Activated CD4-positive, alpha-beta memory T cell treated with anti-CD3 and anti-CD28 coated beads, Interleukin-2, amount 10 ng/mL, durations not matched to agents 7 days and 5 days (primary cell): ENCODE measurements at regions of chr1 and their contacts with region 1.

Region 1: GRCh38 chr1:155167166-155168104 is 5.7 kb downstream of the KRTCAP2 start:
- DNase-seq: peak; percentile 91
- H3K4me3 Mint-ChIP-seq: no peak overlapping the region
- H3K27ac Mint-ChIP-seq: no peak overlapping the region
- H3K4me1 Mint-ChIP-seq: peaks cover 30% of the 10 kb centered on the region
- H3K27me3 Mint-ChIP-seq: peaks cover 1% of the 10 kb centered on the region

Region 2: DNA sequence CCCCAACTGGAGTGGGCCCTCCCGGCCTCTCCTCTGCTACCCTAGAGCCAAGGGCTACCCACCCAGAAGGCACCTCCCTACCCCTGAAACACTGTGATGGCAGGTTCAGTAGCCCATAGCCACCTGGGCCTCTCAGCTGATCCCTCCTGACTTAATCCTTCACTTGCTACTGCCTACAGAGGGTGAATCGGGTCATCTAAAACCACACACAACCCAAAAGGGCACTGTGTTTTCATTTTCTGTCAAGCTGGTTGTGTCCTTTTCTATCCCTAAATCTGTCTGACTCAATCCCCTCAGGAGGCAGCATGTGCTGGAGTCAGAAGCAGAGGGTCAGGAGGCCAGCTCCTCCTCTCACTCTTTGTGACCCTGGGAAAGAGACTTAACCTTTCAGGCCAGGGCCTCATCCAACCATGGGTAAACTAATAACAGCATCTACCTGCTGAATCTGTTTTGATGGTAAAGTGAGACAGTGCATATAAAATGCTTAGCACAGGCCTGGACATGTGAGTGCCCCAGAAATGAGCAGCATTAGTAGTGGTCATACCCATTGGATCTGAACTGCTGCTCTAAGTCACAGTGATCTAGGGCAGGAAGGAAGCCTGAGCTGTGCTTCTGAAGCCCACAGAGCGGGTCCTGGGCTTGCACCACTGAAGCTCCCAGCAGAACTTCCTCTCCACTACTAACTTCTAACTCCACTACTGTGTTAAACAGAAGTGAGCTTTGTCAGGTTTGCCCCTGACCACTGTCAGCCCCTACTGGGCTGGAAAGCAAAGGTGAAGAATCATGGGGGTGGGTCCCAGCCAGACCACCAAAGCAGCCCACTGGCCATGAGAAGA is 241.9 kb before region 1 on chr1:
- CTCF ChIA-PET with region 1: no interaction called
- POLR2A ChIA-PET with region 1: no interaction called
- DNase-seq: no peak
- H3K4me3 Mint-ChIP-seq: no peak overlapping the region
- H3K27ac Mint-ChIP-seq: peak overlapping the region; percentile 67
- H3K4me1 Mint-ChIP-seq: peaks cover 18% of the 10 kb centered on the region
- H3K27me3 Mint-ChIP-seq: no peaks in the 10 kb centered on the region

Region 3: GRCh38 chr1:155091071-155091709 is 76.2 kb before region 1 on chr1:
- CTCF ChIA-PET with region 1: interaction called, 209 read pairs
- POLR2A ChIA-PET with region 1: interaction called, 18 read pairs
- DNase-seq: peak; percentile 81
- H3K4me3 Mint-ChIP-seq: no peak overlapping the region
- H3K27ac Mint-ChIP-seq: no peak overlapping the region
- H3K4me1 Mint-ChIP-seq: peaks cover 10% of the 10 kb centered on the region
- H3K27me3 Mint-ChIP-seq: peaks cover 22% of the 10 kb centered on the region

Region 4: DNA sequence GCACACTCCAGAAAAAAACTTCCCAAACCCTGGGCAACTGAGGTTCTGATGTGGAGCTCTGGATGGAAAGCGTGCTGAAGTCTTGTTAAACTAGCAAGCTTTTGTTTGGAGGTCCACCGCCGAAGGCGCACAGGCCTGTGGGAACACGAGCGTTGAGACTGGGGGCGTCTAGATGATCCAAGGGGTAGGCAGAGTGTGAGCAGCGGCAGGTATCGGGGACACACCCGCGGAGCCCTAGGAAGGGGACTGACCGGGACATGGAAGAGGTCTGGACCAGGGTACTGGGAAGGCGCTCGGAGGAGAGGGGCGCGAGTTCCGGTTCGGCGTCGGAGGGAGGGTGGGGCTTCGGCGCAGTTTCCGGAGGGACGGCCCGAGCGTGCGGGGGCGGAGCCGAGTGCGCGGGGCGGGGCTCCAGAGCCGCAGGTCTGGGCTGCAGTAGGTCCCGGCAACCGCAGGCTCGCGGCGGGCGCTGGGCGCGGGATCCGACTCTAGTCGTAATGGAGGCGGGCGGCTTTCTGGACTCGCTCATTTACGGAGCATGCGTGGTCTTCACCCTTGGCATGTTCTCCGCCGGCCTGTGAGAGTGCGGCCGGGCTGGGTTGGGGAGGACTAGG is 31.9 kb before region 1 on chr1 and contains the start of gene SLC50A1:
- CTCF ChIA-PET with region 1: interaction called, 28 read pairs
- POLR2A ChIA-PET with region 1: interaction called, 21 read pairs
- DNase-seq: peak; percentile 95
- H3K4me3 Mint-ChIP-seq: peak within 1 kb of the TSS; percentile 97
- H3K27ac Mint-ChIP-seq: peak within 1 kb of the TSS; percentile 98
- H3K4me1 Mint-ChIP-seq: peaks cover 49% of the 10 kb centered on the region
- H3K27me3 Mint-ChIP-seq: peaks cover 5% of the 10 kb centered on the region
- total RNA-seq, gene SLC50A1: 50.4 to 52.6 TPM